ENCODE measurements at regions of chr10 and their contacts with region 1.

Region 1: DNA sequence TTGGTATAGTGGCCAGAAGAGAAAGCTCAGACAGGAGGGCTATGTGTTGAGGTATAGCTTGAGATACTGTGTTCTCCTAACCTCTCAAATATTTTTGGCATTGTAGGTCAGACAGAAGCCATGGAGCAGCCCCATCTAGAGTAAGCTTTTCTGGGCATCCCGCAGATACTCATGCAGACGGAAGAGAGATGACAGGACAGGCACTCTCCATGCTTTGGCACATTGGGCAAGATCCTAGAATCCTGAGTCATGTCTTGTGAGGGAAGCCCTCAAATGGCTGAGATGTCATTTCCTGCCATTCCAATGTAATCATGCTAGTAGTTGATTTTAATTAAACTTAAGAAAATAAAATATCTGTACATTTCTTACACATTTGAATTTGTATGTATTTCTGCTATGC is 16.8 kb upstream of the KIF20B start:
- DNase-seq: no peak
- ATAC-seq: no peak
- H3K4me3 ChIP-seq: no peak overlapping the region
- H3K27ac ChIP-seq: no peak overlapping the region
- H3K4me1 ChIP-seq: peaks cover 0 to 6% (median 0%) of the 10 kb centered on the region in 12 donors
- H3K27me3 ChIP-seq: no peaks in the 10 kb centered on the region
- CTCF ChIP-seq: no peak
- POLR2A ChIP-seq: no peak

Region 2: GRCh38 chr10:89666138-89666537 is 18.5 kb before region 1 on chr10:
- intact Hi-C with region 1: loop called in 1 of 10 experiments (anchors 2 kb)
- DNase-seq: no peak
- ATAC-seq: no peak
- H3K4me3 ChIP-seq: no peak overlapping the region
- H3K27ac ChIP-seq: no peak overlapping the region
- H3K4me1 ChIP-seq: peaks cover 0 to 4% (median 0%) of the 10 kb centered on the region in 12 donors
- H3K27me3 ChIP-seq: no peaks in the 10 kb centered on the region
- CTCF ChIP-seq: no peak
- POLR2A ChIP-seq: no peak

Measured in heart left ventricle (tissue), 16 donors.